ENCODE measurements at regions of chr10 and their contacts with region 1.

Region 1: DNA sequence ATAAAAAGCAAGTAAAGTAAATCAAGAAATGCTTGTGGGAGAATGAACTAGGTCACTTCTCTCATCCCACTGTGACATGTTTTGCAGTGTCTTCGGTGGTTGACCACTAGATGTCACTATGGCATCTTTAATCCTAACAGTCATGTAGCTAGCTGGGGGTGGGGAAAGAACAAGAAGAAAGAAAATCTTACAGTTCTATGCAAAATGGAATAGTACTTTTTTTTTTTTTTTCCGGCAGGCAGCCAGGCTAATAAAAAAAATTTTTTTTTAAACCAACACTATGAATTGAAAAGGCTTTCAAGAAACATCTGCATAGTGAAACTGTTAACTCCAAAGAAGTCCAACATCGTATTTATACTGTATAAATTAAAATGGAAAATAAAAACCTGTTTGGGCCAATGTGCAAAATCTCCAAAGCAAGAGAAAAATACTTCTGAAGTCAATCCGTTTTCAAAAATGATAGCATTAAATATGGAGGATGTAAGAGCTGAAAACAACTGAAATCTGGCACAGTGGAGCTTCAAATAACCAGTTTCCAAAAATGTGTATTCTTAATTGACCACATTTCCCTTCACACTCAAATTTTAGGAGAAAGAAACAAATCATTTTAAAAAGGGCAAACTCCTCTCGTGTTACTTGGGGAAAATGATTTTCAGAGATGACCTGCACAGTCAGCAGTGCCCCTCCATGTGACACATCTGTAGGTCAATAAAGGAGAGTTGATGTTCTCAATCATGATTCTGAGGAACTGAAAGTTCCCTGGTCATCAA is 38.5 kb downstream of the CDK1 start:
- DNase-seq: peak in 4 of 5 donors; percentile 45 to 58 (median 46)
- H3K4me3 ChIP-seq: no peak overlapping the region
- H3K4me3 Mint-ChIP-seq: no peak overlapping the region
- H3K27ac ChIP-seq: no peak overlapping the region
- H3K27ac Mint-ChIP-seq: no peak overlapping the region
- H3K4me1 ChIP-seq: peaks cover 6% of the 10 kb centered on the region
- H3K4me1 Mint-ChIP-seq: peaks cover 0 to 15% (median 4%) of the 10 kb centered on the region in 4 donors
- H3K27me3 ChIP-seq: no peaks in the 10 kb centered on the region
- H3K27me3 Mint-ChIP-seq: peaks cover 0 to 2% of the 10 kb centered on the region in 2 donors

Region 2: DNA sequence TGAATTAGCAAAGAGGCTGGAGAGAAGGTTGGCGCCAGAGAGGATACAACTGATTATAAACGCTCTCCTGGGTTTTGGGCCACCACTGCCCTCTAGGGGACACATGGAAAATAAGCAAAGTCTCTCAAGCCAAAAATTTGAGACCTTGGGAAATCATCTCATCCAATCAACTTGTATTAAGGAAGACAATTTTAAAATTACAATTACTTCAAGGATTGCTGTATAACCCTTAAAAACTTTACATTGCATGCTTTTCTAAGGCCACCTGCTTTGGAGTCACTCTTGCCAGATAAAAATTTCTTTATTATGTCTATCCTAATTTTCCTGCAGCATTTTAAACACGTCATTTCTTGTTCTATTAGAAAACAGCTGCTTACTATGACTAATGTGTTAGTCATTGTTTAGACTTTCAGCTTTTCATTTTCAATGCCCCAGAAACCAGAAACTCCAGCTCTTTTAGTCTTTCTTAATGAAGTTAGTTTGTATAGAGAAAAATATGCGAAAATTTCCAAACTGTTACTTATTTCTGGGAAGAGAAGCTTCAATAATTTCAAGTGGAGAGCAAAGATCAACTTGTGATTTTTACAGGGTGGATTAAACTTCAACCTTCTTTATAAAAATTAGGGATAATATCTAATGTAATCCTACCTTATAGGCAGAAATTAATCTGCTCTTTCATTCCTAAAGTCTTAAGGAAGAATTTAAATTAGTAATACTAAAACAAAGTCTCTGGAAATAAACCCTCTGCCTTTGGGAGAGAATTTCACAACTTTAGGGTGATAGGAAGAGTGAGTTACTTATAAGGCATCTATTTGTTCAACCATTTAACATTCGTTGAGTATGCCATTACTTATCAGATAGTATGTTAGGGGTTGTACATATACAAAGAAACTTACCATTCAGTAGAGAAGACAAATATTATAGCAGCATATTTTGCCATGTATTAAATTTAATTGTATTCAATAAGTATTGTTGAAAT is 147.7 kb after region 1 on chr10:
- CTCF ChIA-PET with region 1: interaction called, 5 read pairs
- POLR2A ChIA-PET with region 1: no interaction called
- intact Hi-C with region 1: loop called (anchors 1 kb)
- DNase-seq: peak; percentile 32 to 41 (median 33)
- H3K4me3 ChIP-seq: no peak overlapping the region
- H3K4me3 Mint-ChIP-seq: no peak overlapping the region
- H3K27ac ChIP-seq: no peak overlapping the region
- H3K27ac Mint-ChIP-seq: no peak overlapping the region
- H3K4me1 ChIP-seq: no peaks in the 10 kb centered on the region
- H3K4me1 Mint-ChIP-seq: peaks cover 0 to 2% (median under 1%) of the 10 kb centered on the region in 4 donors
- H3K27me3 ChIP-seq: peaks cover 10% of the 10 kb centered on the region
- H3K27me3 Mint-ChIP-seq: peaks cover 15 to 25% of the 10 kb centered on the region in 2 donors

Region 3: DNA sequence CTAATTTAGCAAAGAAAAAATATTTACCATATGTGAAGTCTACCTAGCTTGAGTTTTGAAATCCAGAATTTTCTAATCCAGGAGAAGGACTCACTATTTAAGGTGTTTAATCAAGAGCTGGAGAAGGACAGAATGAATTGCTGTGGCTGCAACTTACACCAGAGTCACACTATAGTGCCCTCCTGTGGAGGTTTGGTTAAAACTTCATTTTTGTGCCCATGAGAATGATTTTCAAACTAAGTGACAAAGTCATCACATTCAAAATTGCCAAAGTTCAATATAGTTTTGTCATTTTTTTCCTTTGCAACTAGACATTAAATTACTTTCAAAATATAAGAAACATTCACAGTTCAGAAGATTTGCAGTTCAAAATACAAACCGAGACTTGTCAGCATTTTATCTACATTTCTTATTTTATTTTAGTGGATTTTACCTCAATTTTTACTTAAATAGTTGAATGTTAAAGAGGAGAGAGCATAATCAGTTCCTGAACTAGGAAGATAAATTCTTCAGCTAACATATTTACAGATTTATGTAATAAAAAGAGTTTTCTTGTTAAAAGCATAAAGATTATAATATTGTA is 916.6 kb after region 1 on chr10:
- CTCF ChIA-PET with region 1: interaction called, 3 read pairs
- POLR2A ChIA-PET with region 1: no interaction called
- intact Hi-C with region 1: loop called (anchors 5 kb)
- DNase-seq: peak in 4 of 5 donors; percentile 4 to 11 (median 8)
- H3K4me3 ChIP-seq: no peak overlapping the region
- H3K4me3 Mint-ChIP-seq: no peak overlapping the region
- H3K27ac ChIP-seq: no peak overlapping the region
- H3K27ac Mint-ChIP-seq: no peak overlapping the region
- H3K4me1 ChIP-seq: no peaks in the 10 kb centered on the region
- H3K4me1 Mint-ChIP-seq: no peaks in the 10 kb centered on the region
- H3K27me3 ChIP-seq: peaks cover 13% of the 10 kb centered on the region
- H3K27me3 Mint-ChIP-seq: peaks cover 26 to 29% of the 10 kb centered on the region in 2 donors

Region 4: DNA sequence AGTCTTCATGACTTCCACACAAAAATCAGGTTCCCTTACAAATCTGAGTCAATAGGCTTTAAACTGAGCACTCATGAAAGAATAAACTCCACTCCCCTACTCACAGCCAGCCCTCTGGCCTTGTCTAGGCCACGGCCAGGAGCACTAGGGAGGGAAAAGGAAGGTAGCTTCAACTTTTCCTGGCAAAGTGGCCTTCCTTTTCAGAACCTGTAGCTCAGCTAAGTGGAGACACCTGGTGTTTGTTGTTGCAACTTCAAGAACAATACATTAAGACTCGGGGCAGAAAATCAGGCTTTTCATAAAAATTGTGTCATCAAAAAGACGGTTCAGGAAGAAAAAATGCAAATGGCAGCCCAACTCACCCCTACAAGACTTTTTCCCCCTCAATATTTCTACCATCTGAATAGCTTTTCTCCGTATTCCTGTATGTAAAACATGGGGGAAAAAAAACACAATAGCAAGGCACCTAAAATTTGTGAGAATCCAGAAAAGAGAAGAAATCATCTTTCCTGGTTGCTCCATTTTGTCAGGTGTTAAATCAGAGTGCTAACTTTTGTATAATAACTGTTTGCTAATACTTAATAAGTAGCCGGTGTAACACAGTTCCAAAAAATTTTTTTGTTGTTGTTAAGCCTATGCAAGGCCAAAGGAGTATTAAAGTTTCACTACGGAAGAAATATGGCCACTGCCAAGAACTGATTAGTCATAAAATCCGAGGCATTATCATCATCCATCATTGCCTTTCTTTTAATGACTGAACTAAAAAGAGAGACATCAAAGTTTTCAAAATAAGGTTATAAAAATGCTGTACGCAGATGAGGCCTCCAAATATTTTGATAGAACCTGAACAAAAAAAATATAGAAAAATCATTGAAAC is 1018.5 kb after region 1 on chr10:
- CTCF ChIA-PET with region 1: no interaction called
- POLR2A ChIA-PET with region 1: no interaction called
- intact Hi-C with region 1: loop called (anchors 5 kb)
- DNase-seq: peak in 4 of 5 donors; percentile 8 to 15 (median 10)
- H3K4me3 ChIP-seq: no peak overlapping the region
- H3K4me3 Mint-ChIP-seq: peak overlapping the region in 2 of 8 donors; percentile 18 to 50
- H3K27ac ChIP-seq: no peak overlapping the region
- H3K27ac Mint-ChIP-seq: no peak overlapping the region
- H3K4me1 ChIP-seq: peaks cover 15% of the 10 kb centered on the region
- H3K4me1 Mint-ChIP-seq: peaks cover 4 to 14% (median 12%) of the 10 kb centered on the region in 4 donors
- H3K27me3 ChIP-seq: no peaks in the 10 kb centered on the region
- H3K27me3 Mint-ChIP-seq: peaks cover 0 to 2% of the 10 kb centered on the region in 2 donors